ENCODE measurements at regions of chr7 and their contacts with region 1.

Region 1: GRCh38 chr7:116984917-116985316 is 31.6 kb downstream of the ST7 start:
- DNase-seq: no peak
- ATAC-seq: peak; percentile 80
- H3K4me3 ChIP-seq: no peak overlapping the region
- H3K27ac ChIP-seq: no peak overlapping the region
- H3K4me1 ChIP-seq: peaks cover 0 to 9% of the 10 kb centered on the region in 2 experiments; a peak in 1 of 4 replicates
- H3K27me3 ChIP-seq: no peaks in the 10 kb centered on the region
- CTCF ChIP-seq: peak; percentile 56 to 79 (median 59); a peak in 5 of 6 replicates
- POLR2A ChIP-seq: no peak
- RAD21 ChIP-seq: peak; percentile 53

Region 2: GRCh38 chr7:116970238-116970910 is 14.5 kb before region 1 on chr7:
- CTCF ChIA-PET with region 1: interaction called, 11 read pairs
- POLR2A ChIA-PET with region 1: interaction called, 3 read pairs
- RAD21 ChIA-PET with region 1: no interaction called
- intact Hi-C with region 1: no loop called
- DNase-seq: no peak
- ATAC-seq: peak; percentile 54
- H3K4me3 ChIP-seq: no peak overlapping the region
- H3K27ac ChIP-seq: no peak overlapping the region
- H3K4me1 ChIP-seq: peaks cover 15 to 18% of the 10 kb centered on the region in 2 experiments
- H3K27me3 ChIP-seq: no peaks in the 10 kb centered on the region
- CTCF ChIP-seq: no peak
- POLR2A ChIP-seq: no peak
- RAD21 ChIP-seq: no peak

Region 3: DNA sequence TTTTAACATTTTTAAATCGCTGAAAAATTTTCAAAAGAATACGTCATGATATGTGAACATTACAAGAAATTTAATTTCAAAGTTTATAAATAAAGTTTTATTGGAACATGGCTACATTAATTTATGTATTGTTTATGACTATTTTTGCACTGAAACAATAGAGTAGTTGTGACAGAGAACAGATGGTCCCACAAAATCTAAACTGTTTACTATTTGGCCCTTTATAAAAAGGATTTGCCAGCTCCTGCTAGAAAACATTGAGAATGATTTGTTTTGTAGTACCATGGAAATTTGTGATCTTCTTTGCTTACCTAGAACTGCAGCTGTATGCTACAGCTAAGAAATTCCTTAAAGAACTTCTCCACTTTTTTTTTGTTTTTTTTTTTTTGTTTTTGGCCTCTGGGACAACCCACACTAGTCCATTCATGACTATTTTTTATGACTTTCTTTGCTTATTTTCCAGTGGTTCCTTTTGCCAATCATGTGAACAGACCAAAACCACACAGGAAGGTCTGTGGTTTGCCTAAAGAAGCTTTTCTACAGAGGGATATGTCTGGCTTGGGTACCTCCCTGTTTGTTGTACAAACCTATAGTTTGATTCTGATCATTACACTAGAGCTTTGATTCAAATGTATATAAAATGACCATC is 24.1 kb after region 1 on chr7:
- CTCF ChIA-PET with region 1: interaction called, 18 read pairs
- POLR2A ChIA-PET with region 1: no interaction called
- RAD21 ChIA-PET with region 1: no interaction called
- intact Hi-C with region 1: no loop called
- DNase-seq: no peak
- ATAC-seq: no peak
- H3K4me3 ChIP-seq: no peak overlapping the region
- H3K27ac ChIP-seq: no peak overlapping the region
- H3K4me1 ChIP-seq: no peaks in the 10 kb centered on the region
- H3K27me3 ChIP-seq: no peaks in the 10 kb centered on the region
- CTCF ChIP-seq: no peak
- POLR2A ChIP-seq: no peak
- RAD21 ChIP-seq: no peak

Region 4: DNA sequence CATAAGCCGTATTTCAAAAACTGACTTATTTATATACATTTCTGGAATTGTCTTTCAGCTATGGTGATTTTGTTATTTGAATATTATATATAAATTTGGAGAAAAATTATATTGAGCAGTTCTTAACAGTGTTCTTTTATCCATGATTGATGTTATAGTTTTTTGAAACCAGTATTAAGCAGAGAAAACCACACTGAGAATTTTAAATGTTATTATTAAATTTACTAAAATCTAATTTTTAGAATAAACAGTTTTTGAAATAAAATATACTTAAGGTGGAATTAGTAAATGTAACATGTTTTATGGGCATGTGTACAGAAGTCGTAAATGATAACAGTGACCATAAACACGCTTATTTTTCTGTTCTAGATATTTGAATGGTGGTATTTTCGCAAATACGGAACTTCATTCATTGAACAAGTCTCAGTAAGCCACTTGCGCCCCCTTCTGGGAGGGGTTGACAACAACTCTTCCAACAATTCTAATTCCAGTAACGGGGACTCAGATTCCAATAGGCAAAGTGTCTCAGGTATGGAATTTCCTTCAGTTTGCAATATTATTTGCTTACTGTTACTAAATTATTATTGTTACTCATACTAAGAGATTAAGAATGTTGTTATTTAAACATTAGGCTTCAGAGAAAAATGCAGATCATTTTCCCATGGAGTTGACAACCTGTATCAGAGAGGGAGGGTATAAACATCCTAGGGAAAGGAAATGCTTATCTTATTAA is 134.4 kb after region 1 on chr7:
- CTCF ChIA-PET with region 1: interaction called, 20 read pairs
- POLR2A ChIA-PET with region 1: no interaction called
- RAD21 ChIA-PET with region 1: interaction called in 1 of 2 experiments, 4 read pairs
- intact Hi-C with region 1: loop called (anchors 2 kb)
- DNase-seq: peak; percentile 62
- ATAC-seq: peak; percentile 67
- H3K4me3 ChIP-seq: no peak overlapping the region
- H3K27ac ChIP-seq: no peak overlapping the region
- H3K4me1 ChIP-seq: peaks cover 4% of the 10 kb centered on the region in 2 experiments
- H3K27me3 ChIP-seq: no peaks in the 10 kb centered on the region
- CTCF ChIP-seq: peak; percentile 83 to 91 (median 86)
- POLR2A ChIP-seq: no peak
- RAD21 ChIP-seq: peak; percentile 90

Region 5: DNA sequence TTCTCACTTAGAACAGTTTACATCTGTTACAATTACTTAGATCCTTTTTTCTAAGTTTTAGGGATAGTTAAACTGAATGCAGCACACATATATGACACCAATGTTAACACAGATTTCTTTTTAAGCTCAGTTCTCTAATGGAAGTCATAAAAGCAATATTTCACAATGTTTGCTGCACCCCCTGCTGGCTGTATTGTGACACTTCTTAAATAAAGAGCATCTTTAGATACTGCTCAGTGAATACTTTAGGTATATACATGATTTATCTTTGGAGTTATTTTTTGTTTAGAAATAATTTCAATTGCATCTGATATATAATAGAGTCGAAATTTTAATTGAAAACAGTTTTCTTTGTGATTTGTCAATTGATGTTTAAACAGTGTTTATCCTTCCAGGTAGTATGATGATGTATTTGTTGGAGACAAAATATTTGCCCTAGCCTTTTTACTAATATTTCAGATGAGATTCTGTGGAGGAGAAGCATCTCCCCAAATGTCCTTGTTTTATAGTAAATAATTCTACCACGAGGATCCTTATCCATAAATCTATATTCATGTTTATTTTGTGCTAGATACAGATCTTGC is 142.8 kb after region 1 on chr7:
- CTCF ChIA-PET with region 1: interaction called, 26 read pairs
- POLR2A ChIA-PET with region 1: no interaction called
- RAD21 ChIA-PET with region 1: interaction called in 1 of 2 experiments, 3 read pairs
- intact Hi-C with region 1: no loop called
- DNase-seq: peak; percentile 28
- ATAC-seq: peak; percentile 55
- H3K4me3 ChIP-seq: no peak overlapping the region
- H3K27ac ChIP-seq: no peak overlapping the region
- H3K4me1 ChIP-seq: peaks cover 13 to 33% of the 10 kb centered on the region in 2 experiments
- H3K27me3 ChIP-seq: no peaks in the 10 kb centered on the region
- CTCF ChIP-seq: peak; percentile 61 to 82 (median 68); a peak in 5 of 6 replicates
- POLR2A ChIP-seq: no peak
- RAD21 ChIP-seq: peak; percentile 74

Region 6: DNA sequence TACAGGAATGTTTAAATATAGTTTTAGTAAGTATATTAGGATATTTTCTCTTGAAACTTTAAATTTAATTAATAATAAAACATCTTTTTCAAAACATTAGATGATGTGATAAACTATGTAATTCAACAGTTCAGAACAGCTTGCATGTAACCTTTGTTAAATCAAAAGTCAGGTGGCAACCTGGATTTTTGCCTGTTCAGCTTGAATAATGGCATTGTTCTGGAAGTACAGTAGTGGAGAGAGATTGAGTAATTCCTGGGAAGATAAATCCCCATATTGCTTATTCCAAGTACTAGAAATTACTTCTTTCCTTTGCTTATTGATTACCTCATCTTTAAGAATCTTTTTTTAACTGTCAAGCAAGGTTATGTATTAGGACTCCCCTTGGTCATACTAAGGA is 474.8 kb after region 1 on chr7:
- CTCF ChIA-PET with region 1: no interaction called
- POLR2A ChIA-PET with region 1: no interaction called
- RAD21 ChIA-PET with region 1: no interaction called
- intact Hi-C with region 1: no loop called
- DNase-seq: no peak
- ATAC-seq: no peak
- H3K4me3 ChIP-seq: no peak overlapping the region
- H3K27ac ChIP-seq: no peak overlapping the region
- H3K4me1 ChIP-seq: no peaks in the 10 kb centered on the region
- H3K27me3 ChIP-seq: no peaks in the 10 kb centered on the region
- CTCF ChIP-seq: no peak
- POLR2A ChIP-seq: no peak
- RAD21 ChIP-seq: no peak